ENCODE measurements at regions of chr7 and their contacts with region 1.

Region 1: GRCh38 chr7:16891338-16891737 is 9.6 kb upstream of the AGR3 start:
- DNase-seq: peak; percentile 30
- H3K4me3 ChIP-seq: no peak overlapping the region
- H3K27ac ChIP-seq: no peak overlapping the region
- H3K27me3 ChIP-seq: no peaks in the 10 kb centered on the region
- CTCF ChIP-seq: peak; percentile 66

Region 2: DNA sequence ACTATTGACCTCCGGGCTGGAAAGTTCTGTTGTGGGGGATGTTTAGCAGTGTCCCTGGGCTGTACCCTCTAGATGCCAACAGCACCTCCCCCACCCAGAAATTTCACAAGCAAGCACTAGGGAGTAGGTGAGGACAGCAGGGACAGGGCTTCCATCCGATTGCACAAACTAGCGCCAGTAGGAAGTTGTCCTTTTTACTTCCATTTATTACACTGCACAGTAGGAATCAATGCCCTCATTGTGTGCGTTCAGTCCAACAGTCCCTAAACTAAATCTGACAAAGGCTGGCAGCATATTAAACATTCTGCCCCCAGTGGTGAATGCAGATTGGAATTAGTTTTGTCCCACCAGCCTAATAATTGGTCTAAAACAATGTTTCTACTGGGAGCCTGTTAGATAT is 419.4 kb before region 1 on chr7:
- CTCF ChIA-PET with region 1: no interaction called
- POLR2A ChIA-PET with region 1: no interaction called
- DNase-seq: no peak
- H3K4me3 ChIP-seq: no peak overlapping the region
- H3K27ac ChIP-seq: no peak overlapping the region
- H3K27me3 ChIP-seq: no peaks in the 10 kb centered on the region
- CTCF ChIP-seq: 0 out of 2 replicates have a peak, but pooled peaks have one; percentile 11

Region 3: DNA sequence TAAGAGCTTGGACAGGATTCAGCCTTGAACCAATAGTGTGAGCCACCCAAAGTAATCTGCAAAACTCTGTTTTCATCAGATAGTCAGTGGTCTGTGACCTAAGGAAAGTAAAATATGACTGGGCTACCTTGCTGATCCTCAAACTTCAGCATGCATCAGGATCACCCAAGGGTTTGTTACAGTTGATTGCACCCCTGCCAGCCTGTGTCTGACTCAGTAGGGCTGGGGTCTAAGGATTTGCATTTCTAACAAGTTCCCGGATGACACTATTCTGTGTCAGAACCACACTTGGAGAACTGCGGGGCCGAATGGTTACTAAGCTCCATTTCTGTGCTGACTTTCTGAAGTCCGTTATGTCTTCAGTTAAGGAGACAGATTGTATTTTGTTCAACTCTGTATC is 178.4 kb before region 1 on chr7:
- CTCF ChIA-PET with region 1: no interaction called
- POLR2A ChIA-PET with region 1: no interaction called
- DNase-seq: no peak
- H3K4me3 ChIP-seq: no peak overlapping the region
- H3K27ac ChIP-seq: no peak overlapping the region
- H3K27me3 ChIP-seq: no peaks in the 10 kb centered on the region
- CTCF ChIP-seq: no peak

Region 4: GRCh38 chr7:16905300-16906044 is 14.1 kb after region 1 on chr7:
- CTCF ChIA-PET with region 1: interaction called, 12 read pairs
- POLR2A ChIA-PET with region 1: no interaction called
- DNase-seq: peak; percentile 52
- H3K4me3 ChIP-seq: no peak overlapping the region
- H3K27ac ChIP-seq: no peak overlapping the region
- H3K27me3 ChIP-seq: no peaks in the 10 kb centered on the region
- CTCF ChIP-seq: no peak

Region 5: DNA sequence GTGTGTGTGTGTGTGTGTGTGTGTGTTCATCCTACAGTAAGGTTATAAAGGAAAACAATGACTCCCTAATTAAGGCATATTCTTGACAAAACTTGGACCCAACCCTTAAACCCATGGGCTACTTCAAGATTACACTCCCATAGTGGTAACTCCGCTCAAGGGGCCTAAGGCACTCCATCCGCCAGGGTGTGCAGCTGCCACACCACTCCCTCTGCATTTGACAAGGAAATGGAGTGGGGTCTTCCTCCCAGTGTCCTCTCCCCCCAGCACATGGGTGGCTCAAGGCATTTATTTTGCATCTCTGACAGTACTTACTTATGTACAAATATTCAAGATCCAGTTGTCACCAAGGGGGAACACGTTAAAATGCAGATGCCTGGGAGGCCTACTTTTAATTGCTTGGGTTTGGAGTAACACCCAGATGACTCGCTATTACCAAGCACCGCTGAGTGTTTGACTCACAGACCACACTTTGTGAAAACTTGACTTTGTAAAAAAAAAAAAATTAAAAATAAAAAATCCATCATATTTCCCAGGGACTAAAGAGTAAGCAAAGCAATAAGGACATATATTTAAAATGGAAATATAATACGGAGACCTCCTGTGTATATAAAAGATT is 43.5 kb after region 1 on chr7:
- CTCF ChIA-PET with region 1: no interaction called
- POLR2A ChIA-PET with region 1: no interaction called
- DNase-seq: no peak
- H3K4me3 ChIP-seq: no peak overlapping the region
- H3K27ac ChIP-seq: no peak overlapping the region
- H3K27me3 ChIP-seq: no peaks in the 10 kb centered on the region
- CTCF ChIP-seq: no peak

Region 6: GRCh38 chr7:17056491-17057142 is 165.3 kb after region 1 on chr7:
- CTCF ChIA-PET with region 1: no interaction called
- POLR2A ChIA-PET with region 1: no interaction called
- DNase-seq: peak; percentile 20
- H3K4me3 ChIP-seq: no peak overlapping the region
- H3K27ac ChIP-seq: peak overlapping the region; percentile 48
- H3K27me3 ChIP-seq: no peaks in the 10 kb centered on the region
- CTCF ChIP-seq: no peak

Measured in AG04450 (cell line).